Activated T-helper 2 cell treated with anti-CD3 and anti-CD28 coated beads, Interferon-gamma antibody, Interleukin-2, Interleukin-4, amounts not matched to agents 10 μg/mL and 5 μg/mL and 100 μg/mL, durations not matched to agents 14 hours and 24 hours and 36 hours (primary cell): ENCODE measurements at regions of chr7 and their contacts with region 1.

Region 1: GRCh38 chr7:16420649-16421332 is 547 bp downstream of the CRPPA start:
- DNase-seq: peak; percentile 86
- H3K4me3 Mint-ChIP-seq: peak overlapping the region; percentile 91
- H3K27ac Mint-ChIP-seq: peak overlapping the region; percentile 96
- H3K4me1 Mint-ChIP-seq: peaks cover 25% of the 10 kb centered on the region
- H3K27me3 Mint-ChIP-seq: peaks cover 8% of the 10 kb centered on the region

Region 2: GRCh38 chr7:16071246-16071857 is 349.4 kb before region 1 on chr7:
- intact Hi-C with region 1: loop called (anchors 10 kb)
- DNase-seq: no peak
- H3K4me3 Mint-ChIP-seq: no peak overlapping the region
- H3K27ac Mint-ChIP-seq: no peak overlapping the region
- H3K4me1 Mint-ChIP-seq: no peaks in the 10 kb centered on the region
- H3K27me3 Mint-ChIP-seq: no peaks in the 10 kb centered on the region

Region 3: GRCh38 chr7:16492513-16493062 is 71.8 kb after region 1 on chr7:
- intact Hi-C with region 1: loop called (anchors 5 kb)
- DNase-seq: no peak
- H3K4me3 Mint-ChIP-seq: no peak overlapping the region
- H3K27ac Mint-ChIP-seq: no peak overlapping the region
- H3K4me1 Mint-ChIP-seq: peaks cover 7% of the 10 kb centered on the region
- H3K27me3 Mint-ChIP-seq: peaks cover 2% of the 10 kb centered on the region

Region 4: DNA sequence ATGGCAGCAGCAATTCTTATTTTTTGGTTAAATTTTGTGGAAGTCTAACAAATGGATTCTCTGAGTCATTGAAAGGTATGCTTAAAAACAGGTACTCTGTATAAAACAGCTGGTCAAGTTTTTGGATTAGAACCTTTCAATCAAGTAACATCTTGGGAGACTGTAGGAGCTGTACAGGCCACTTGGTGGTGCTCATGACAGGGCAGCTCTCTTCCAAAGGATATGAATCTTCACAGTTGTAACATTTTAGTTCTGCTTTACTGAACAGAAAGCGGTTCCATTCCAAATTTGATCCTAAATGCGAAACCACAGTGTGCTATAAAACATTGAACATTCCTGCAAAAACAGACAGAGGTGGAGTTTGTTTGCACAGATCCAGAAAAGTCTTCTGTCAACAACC is 505.5 kb after region 1 on chr7:
- intact Hi-C with region 1: loop called (anchors 10 kb)
- DNase-seq: no peak
- H3K4me3 Mint-ChIP-seq: no peak overlapping the region
- H3K27ac Mint-ChIP-seq: peak overlapping the region; percentile 43
- H3K4me1 Mint-ChIP-seq: peaks cover 62% of the 10 kb centered on the region
- H3K27me3 Mint-ChIP-seq: no peaks in the 10 kb centered on the region